ENCODE measurements at regions of chr5 and their contacts with region 1.

Region 1: DNA sequence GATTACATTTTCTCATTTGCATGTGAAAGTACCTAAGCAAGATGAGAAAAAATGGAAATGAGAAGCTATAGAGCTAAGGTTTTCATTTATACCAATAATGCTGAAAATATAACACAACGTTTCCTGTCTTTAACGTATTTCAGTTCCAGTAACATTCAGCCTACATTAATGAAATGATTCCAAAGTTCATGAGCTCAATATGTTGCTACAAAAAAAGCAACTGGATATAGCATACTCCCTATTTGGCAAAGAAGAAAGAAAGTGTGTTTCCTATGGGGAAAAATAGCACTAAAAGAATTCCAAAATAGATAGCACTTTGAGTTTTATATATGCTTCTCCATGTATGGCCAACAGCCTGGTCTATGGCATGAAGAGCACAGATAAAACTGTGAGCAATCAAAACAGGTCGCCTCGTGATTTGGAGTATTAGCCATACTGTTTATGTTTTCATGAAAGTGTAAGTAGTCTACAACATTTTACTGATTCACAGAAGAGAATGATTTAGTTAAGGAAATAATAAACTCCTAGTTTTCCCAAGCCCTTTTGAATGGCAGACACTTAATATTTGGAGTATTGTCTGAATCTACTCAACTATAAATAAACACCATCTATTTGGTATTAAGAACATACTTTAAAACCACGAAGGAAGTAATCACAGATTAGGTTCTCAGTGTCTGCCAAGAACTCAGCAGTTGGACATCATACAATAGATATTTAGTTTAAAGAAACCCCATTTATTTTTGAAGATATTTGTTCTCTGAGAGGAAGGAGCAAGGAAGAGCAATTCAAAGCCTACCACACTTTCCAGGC is 258.7 kb upstream of the RASA1 start:
- DNase-seq: no peak
- H3K4me3 Mint-ChIP-seq: no peak overlapping the region
- H3K27ac Mint-ChIP-seq: no peak overlapping the region
- H3K4me1 Mint-ChIP-seq: no peaks in the 10 kb centered on the region
- H3K27me3 Mint-ChIP-seq: no peaks in the 10 kb centered on the region

Region 2: GRCh38 chr5:86880785-86881492 is 128.0 kb before region 1 on chr5:
- CTCF ChIA-PET with region 1: interaction called, 11 read pairs
- intact Hi-C with region 1: loop called (anchors 2 kb)
- DNase-seq: peak; percentile 58
- H3K4me3 Mint-ChIP-seq: no peak overlapping the region
- H3K27ac Mint-ChIP-seq: no peak overlapping the region
- H3K4me1 Mint-ChIP-seq: no peaks in the 10 kb centered on the region
- H3K27me3 Mint-ChIP-seq: peaks cover 6% of the 10 kb centered on the region

Measured in activated naive CD4-positive, alpha-beta T cell treated with anti-CD3 and anti-CD28 coated beads for 36 hours (primary cell).